ENCODE measurements at regions of chr10 and their contacts with region 1.

Region 1: DNA sequence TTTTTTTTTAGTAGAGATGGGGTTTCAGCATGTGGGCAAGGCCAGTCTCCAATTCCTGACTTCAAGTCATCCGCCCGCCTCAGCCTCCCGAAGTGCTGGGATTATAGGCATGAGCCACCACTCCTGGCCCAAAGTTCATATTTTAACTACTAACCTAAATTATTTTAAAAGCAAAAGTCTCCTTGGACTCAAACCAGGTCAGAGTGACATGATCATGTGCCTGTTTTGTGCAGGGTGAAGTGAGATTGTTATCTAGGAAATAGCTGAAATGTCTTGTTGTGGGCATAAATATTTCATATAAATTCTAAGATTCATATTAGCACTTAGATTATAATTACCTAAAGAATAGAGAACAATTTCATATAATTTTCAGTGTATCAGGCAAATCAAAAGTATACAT is 183.7 kb downstream of the MALRD1 start:
- DNase-seq: no peak
- H3K4me3 ChIP-seq: no peak overlapping the region
- H3K27ac ChIP-seq: no peak overlapping the region
- H3K4me1 ChIP-seq: no peaks in the 10 kb centered on the region
- H3K27me3 ChIP-seq: no peaks in the 10 kb centered on the region
- CTCF ChIP-seq: no peak
- EP300 ChIP-seq: no peak
- POLR2A ChIP-seq: no peak

Region 2: DNA sequence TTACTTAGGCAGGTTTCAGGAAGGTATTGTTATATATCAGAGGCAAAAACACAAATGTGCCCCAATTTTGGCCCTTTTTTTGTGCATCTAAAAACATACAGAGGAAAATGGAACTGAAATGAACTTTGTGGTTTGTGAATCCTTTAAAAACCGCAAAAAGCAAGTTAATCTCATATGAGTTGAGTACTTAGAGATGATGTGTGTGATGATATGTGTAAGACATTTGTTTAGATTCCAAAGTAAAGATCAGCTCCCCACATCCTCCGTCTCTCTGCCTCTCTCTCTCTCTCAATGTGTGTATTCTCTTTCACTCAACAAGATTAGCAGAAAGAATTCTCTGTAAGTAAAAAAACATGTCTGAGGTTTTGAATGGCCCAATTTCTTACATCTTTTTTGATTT is 18.2 kb after region 1 on chr10:
- intact Hi-C with region 1: loop called in 1 of 4 experiments (anchors 1 kb)
- DNase-seq: no peak
- H3K4me3 ChIP-seq: no peak overlapping the region
- H3K27ac ChIP-seq: no peak overlapping the region
- H3K4me1 ChIP-seq: no peaks in the 10 kb centered on the region
- H3K27me3 ChIP-seq: no peaks in the 10 kb centered on the region
- CTCF ChIP-seq: no peak
- EP300 ChIP-seq: no peak
- POLR2A ChIP-seq: no peak

Measured in ovary (tissue), 10 donors.